GM12878 (cell line): ENCODE measurements at regions of chr20 and their contacts with region 1.

Region 1: GRCh38 chr20:61120595-61121515 is 131.2 kb upstream of the CDH4 start:
- DNase-seq: no peak
- ATAC-seq: no peak
- H3K4me3 ChIP-seq: no peak overlapping the region
- H3K27ac ChIP-seq: no peak overlapping the region
- H3K4me1 ChIP-seq: no peaks in the 10 kb centered on the region
- H3K27me3 ChIP-seq: no peaks in the 10 kb centered on the region
- CTCF ChIP-seq: 0 out of 6 replicates have a peak, but pooled peaks of 1 of the 3 experiments have one; percentile 1
- EP300 ChIP-seq: no peak
- POLR2A ChIP-seq: no peak
- RAD21 ChIP-seq: no peak

Region 2: DNA sequence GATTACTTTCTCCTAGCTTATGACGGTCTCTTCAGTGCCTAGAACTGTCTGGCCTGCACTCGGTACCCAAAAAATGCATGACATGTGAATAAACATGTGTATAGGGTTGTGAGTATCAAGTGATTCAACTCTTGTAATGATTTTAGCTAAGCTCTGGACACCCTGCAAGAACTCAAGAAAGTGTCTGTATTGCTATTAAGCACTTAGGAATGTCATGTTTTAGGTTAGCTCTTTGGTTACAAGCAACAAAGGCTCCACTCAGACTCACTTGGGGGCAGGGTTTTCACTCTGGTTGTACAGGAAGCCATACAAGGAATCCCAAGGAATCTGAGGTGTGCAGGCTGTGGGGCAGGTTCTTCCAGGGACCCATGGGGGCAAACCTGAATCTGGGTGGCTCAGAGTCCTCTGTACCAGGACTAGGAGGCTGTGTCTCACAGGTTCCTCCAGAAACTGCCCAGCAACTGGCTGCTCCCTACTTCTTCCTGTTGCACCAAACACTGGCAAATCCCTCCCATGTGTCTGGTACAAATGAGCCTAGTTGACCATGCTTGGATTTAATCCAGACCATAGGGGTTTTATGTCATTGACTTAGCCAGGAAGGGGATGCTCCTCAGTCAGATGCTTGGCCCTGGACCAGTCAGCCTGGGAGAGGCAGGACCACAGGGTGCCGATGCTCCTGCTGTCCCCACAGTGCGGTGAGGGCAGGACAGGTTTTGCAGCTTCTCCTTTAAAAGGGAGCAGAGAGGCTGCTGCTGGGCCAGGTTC is 53.3 kb after region 1 on chr20:
- CTCF ChIA-PET with region 1: no interaction called
- POLR2A ChIA-PET with region 1: no interaction called
- RAD21 ChIA-PET with region 1: no interaction called
- SMC1A ChIA-PET with region 1: no interaction called
- in situ Hi-C with region 1: loop called (anchors 5 kb)
- intact Hi-C with region 1: no loop called
- DNase-seq: no peak
- ATAC-seq: no peak
- H3K4me3 ChIP-seq: no peak overlapping the region
- H3K27ac ChIP-seq: no peak overlapping the region
- H3K4me1 ChIP-seq: no peaks in the 10 kb centered on the region
- H3K27me3 ChIP-seq: no peaks in the 10 kb centered on the region
- CTCF ChIP-seq: no peak
- EP300 ChIP-seq: no peak
- POLR2A ChIP-seq: no peak
- RAD21 ChIP-seq: no peak

Region 3: DNA sequence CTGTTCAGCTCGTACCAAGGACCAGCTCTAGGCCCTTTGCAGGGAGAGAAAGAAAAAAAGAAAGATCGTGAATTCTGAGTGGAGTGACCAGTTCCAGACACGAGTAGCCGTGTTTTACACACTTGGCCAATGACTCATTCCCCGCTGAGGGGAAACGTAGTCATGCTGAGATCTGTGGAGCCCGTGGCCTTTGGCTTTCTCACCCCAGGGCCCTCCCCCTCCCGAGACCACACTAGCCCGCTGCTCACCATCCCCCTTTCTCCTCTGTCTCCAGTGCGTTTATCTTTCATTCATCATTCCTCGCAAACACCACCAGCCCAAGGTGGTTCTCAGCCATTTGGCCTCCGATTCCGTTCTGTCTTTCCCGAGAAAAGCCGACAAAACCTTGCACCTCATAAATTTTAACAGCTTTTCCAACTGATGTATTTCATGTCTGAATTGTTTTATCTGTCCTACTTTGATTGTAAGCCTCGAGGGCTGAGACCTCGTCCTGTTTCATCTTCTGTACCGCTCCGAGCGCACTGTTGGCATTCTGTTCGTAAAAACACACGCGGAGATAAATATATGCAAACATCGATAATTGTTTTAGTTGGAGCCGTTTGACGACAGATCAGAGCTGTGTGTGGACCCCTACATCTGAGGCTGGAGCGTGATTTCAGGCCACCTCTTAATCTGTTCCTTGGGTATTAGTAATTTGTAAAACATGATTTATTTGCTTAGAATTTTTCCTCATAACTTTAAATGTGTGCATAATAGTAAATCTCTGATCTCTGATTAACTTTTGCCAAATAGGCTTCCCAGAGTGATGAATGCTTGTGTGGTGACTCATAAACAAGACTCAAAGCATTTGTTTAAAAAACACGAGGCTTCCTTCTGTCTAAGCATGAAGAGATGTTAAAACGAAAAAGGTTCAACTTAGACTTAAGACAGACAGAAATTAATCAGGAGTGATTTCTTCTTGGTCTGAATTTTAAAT is 467.8 kb after region 1 on chr20:
- CTCF ChIA-PET with region 1: no interaction called
- POLR2A ChIA-PET with region 1: no interaction called
- RAD21 ChIA-PET with region 1: no interaction called
- SMC1A ChIA-PET with region 1: no interaction called
- in situ Hi-C with region 1: no loop called
- intact Hi-C with region 1: no loop called
- DNase-seq: no peak
- ATAC-seq: no peak
- H3K4me3 ChIP-seq: no peak overlapping the region
- H3K27ac ChIP-seq: no peak overlapping the region
- H3K4me1 ChIP-seq: no peaks in the 10 kb centered on the region
- H3K27me3 ChIP-seq: no peaks in the 10 kb centered on the region
- CTCF ChIP-seq: no peak
- EP300 ChIP-seq: no peak
- POLR2A ChIP-seq: no peak
- RAD21 ChIP-seq: no peak